ENCODE measurements at regions of chr12 and their contacts with region 1.

Region 1: GRCh38 chr12:30847259-30847658 is 79.3 kb upstream of the TSPAN11 start:
- DNase-seq: peak in 1 of 2 experiments; percentile 81
- ATAC-seq: peak in 1 of 2 experiments; percentile 70; a peak in 3 of 6 replicates
- H3K4me3 ChIP-seq: no peak overlapping the region
- H3K27ac ChIP-seq: no peak overlapping the region
- H3K4me1 ChIP-seq: no peaks in the 10 kb centered on the region
- CTCF ChIP-seq: peak; percentile 98
- EP300 ChIP-seq: no peak
- POLR2A ChIP-seq: no peak
- RAD21 ChIP-seq: peak; percentile 92 to 97

Region 2: DNA sequence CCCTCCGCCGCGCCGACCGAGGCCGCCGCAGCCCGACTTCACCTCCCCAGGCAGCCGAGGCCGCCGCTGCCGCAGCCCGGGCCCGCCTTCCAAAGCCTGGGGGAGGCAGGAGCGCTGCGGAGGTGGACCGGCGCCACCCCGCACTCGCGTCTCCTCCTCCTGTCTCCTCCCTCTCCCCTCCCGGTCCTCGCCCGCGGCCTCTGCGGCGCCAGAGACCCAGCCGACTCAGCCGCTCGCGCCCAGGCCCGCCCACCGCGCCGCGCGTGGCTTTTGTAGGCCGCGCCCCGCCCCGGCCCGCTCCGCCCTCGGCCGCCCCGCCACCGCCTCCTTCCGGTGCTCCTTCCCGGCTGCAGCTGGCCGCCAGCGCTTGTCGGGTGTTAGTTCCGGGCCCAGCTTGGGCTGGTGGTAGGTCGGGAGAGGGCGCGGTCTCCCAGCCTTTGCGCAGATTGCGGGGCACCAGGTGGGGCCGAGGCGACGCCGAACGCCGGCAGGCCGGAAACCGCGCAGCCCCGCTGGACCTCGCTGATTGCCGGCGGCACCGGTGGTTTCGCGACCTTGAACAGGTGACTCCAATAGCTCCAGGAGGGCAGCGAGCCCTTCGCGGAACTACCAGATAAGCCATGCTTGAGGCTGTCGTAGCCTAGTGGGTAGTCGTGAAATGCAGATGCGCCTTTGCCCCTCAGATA is 92.4 kb before region 1 on chr12 and contains the start of gene CAPRIN2:
- CTCF ChIA-PET with region 1: interaction called, 25 read pairs
- POLR2A ChIA-PET with region 1: no interaction called
- DNase-seq: peak; percentile 87 to 97
- ATAC-seq: peak; percentile 94 to 96
- H3K4me3 ChIP-seq: peak within 1 kb of the TSS; percentile 75
- H3K27ac ChIP-seq: peak within 1 kb of the TSS; percentile 89 to 98
- H3K4me1 ChIP-seq: peaks cover 28% of the 10 kb centered on the region; the same call in 2 of the 3 replicates
- CTCF ChIP-seq: peak; percentile 43
- EP300 ChIP-seq: peak in 1 of 2 experiments; percentile 12; a peak in 1 of 5 replicates
- POLR2A ChIP-seq: peak; percentile 74
- RAD21 ChIP-seq: peak; percentile 66 to 82
- polyA plus RNA-seq, gene CAPRIN2: 26.2 and 31.6 TPM in 2 replicates

Region 3: GRCh38 chr12:30782316-30783173 is 64.7 kb before region 1 on chr12:
- CTCF ChIA-PET with region 1: no interaction called
- POLR2A ChIA-PET with region 1: no interaction called
- DNase-seq: no peak
- ATAC-seq: no peak
- H3K4me3 ChIP-seq: no peak overlapping the region
- H3K27ac ChIP-seq: no peak overlapping the region
- H3K4me1 ChIP-seq: no peaks in the 10 kb centered on the region
- CTCF ChIP-seq: no peak
- EP300 ChIP-seq: no peak
- POLR2A ChIP-seq: no peak
- RAD21 ChIP-seq: no peak

Region 4: GRCh38 chr12:30862486-30862885 is 15.2 kb after region 1 on chr12:
- CTCF ChIA-PET with region 1: interaction called, 14 read pairs
- POLR2A ChIA-PET with region 1: no interaction called
- DNase-seq: no peak
- ATAC-seq: peak in 1 of 2 experiments; percentile 44; a peak in 3 of 6 replicates
- H3K4me3 ChIP-seq: no peak overlapping the region
- H3K27ac ChIP-seq: no peak overlapping the region
- H3K4me1 ChIP-seq: no peaks in the 10 kb centered on the region
- CTCF ChIP-seq: no peak
- EP300 ChIP-seq: no peak
- POLR2A ChIP-seq: no peak
- RAD21 ChIP-seq: no peak

Region 5: DNA sequence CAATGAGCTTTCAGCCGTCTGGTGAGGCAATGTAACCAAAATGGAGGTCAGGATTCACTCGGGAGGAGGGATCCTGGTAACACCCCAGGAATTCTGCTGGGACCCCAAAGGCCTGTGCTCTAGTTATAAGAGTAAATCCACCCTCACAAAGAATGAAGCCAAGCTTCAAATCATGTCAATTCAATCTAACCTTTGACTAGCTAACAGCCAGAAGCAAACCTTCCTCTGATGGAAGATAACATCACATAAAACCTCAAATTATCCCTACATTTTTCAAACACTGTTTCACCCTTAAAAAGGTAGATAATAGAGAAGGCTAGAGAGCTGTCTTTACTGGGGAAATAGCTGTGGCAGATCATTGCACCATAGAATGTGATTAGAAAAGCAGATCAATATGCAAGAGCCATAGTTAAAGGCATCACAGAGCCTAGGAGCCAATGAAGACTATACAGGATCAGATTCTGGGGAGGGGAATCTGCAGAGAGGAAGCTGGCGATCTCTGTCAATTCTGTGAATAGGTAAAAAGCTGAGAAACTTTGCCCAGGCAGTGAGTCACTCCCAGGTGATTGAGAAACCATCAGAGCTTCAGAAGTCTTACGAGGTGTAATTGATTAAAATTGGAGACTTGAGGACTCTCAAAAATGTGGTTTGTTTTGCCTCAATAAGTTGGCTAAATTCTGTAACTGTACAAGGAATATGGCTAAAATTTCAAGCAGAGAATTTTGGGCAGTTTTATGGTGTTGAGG is 37.4 kb after region 1 on chr12:
- CTCF ChIA-PET with region 1: interaction called, 13 read pairs
- POLR2A ChIA-PET with region 1: no interaction called
- DNase-seq: no peak
- ATAC-seq: no peak
- H3K4me3 ChIP-seq: no peak overlapping the region
- H3K27ac ChIP-seq: no peak overlapping the region
- H3K4me1 ChIP-seq: no peaks in the 10 kb centered on the region
- CTCF ChIP-seq: no peak
- EP300 ChIP-seq: no peak
- POLR2A ChIP-seq: no peak
- RAD21 ChIP-seq: no peak

Region 6: DNA sequence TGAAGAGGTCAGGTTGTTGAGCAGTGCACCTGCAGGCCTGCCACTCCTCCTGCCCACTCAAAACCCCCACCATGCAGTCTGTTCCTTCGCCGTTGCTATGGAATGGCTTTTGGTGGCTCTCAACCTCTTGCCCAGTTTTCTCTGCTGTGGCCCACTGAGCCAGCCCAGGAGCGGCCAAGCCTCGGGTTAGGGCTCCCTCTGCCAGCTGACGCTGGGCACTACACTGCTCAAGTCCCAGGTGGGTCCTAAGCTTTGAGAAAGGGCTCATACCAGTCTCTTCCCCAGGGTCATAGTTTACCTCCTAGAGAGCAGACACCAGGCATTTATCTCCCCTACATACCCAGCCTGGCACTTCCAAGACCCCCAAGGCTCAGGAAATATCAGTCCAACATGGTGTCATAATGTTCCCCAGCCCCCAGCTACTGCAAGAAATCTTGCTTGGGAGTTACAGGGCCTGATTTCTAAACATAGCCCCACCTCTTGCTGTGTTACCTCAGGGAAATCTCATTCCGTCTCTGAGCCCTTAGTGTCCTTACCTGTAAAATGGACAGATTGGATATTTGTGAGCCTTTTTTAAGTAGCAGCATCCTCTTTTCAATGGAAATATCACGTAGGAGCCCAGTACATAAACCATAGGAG is 138.7 kb after region 1 on chr12:
- CTCF ChIA-PET with region 1: interaction called, 120 read pairs
- POLR2A ChIA-PET with region 1: no interaction called
- DNase-seq: peak; percentile 55 to 73
- ATAC-seq: peak; percentile 82 to 93
- H3K4me3 ChIP-seq: no peak overlapping the region
- H3K27ac ChIP-seq: no peak overlapping the region
- H3K4me1 ChIP-seq: no peaks in the 10 kb centered on the region
- CTCF ChIP-seq: peak; percentile 67
- EP300 ChIP-seq: no peak
- POLR2A ChIP-seq: no peak
- RAD21 ChIP-seq: peak; percentile 72 to 78

Region 7: DNA sequence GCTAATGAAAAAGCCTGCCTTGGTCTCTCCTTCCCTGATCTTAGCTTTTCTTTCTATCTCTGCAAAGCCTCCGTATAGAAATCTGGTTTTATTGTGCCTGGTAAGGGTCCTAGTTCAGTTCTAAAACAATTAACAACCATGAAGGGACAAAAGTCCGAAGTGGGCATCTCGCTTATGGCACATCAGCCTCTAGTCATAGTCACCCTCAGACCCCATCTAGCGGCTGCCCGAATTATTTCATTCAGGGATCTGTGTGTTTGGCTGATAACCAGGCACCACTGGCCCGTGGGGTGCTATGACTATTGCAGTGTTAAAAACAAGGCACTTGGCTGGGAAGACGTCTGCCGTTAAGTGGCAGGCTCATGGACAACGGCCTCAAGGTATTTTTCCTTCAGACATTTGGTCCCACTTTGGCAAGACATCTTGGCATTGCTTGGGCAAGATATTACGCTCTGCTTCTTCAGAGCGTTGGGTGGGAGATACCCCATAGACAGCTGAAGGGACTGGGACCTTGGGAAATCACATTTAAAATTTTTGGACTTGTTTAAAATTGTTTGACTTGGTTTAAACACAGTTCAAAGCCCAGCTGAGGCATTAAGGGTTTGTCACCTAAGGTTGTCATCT is 391.6 kb after region 1 on chr12:
- CTCF ChIA-PET with region 1: interaction called, 72 read pairs
- POLR2A ChIA-PET with region 1: no interaction called
- DNase-seq: peak; percentile 67 to 79
- ATAC-seq: peak; percentile 85 to 91; a peak in 5 of 6 replicates
- H3K4me3 ChIP-seq: 0 out of 3 replicates have a peak overlapping the region, but pooled peaks have one; percentile 16
- H3K27ac ChIP-seq: no peak overlapping the region
- H3K4me1 ChIP-seq: no peaks in the 10 kb centered on the region
- CTCF ChIP-seq: peak; percentile 71
- EP300 ChIP-seq: no peak
- POLR2A ChIP-seq: no peak
- RAD21 ChIP-seq: peak; percentile 58 to 70

Region 8: GRCh38 chr12:31491819-31492598 is 644.8 kb after region 1 on chr12:
- CTCF ChIA-PET with region 1: no interaction called
- POLR2A ChIA-PET with region 1: no interaction called
- DNase-seq: peak; percentile 29 to 77
- ATAC-seq: peak in 1 of 2 experiments; percentile 65; a peak in 3 of 6 replicates
- H3K4me3 ChIP-seq: no peak overlapping the region
- H3K27ac ChIP-seq: peak overlapping the region; percentile 83 to 89
- H3K4me1 ChIP-seq: peaks cover 79% of the 10 kb centered on the region
- CTCF ChIP-seq: no peak
- EP300 ChIP-seq: peak in 1 of 2 experiments; percentile 31; a peak in 1 of 5 replicates
- POLR2A ChIP-seq: no peak
- RAD21 ChIP-seq: 0 out of 5 replicates have a peak, but pooled peaks of 1 of the 2 experiments have one; percentile 5

Measured in A549 (cell line).